GM13976 (cell line): ENCODE measurements at regions of chr5 and their contacts with region 1.

Region 1: GRCh38 chr5:160342403-160342941 is 28.0 kb downstream of the C1QTNF2 start:
- DNase-seq: no peak
- CTCF ChIP-seq: no peak

Region 2: GRCh38 chr5:160021831-160022446 is 320.5 kb before region 1 on chr5:
- in situ Hi-C with region 1: loop called (anchors 10 kb)
- DNase-seq: peak; percentile 60
- CTCF ChIP-seq: peak; percentile 77

Region 3: GRCh38 chr5:160199410-160199911 is 143.0 kb before region 1 on chr5:
- in situ Hi-C with region 1: loop called (anchors 5 kb)
- DNase-seq: peak; percentile 90
- CTCF ChIP-seq: peak; percentile 93

Region 4: DNA sequence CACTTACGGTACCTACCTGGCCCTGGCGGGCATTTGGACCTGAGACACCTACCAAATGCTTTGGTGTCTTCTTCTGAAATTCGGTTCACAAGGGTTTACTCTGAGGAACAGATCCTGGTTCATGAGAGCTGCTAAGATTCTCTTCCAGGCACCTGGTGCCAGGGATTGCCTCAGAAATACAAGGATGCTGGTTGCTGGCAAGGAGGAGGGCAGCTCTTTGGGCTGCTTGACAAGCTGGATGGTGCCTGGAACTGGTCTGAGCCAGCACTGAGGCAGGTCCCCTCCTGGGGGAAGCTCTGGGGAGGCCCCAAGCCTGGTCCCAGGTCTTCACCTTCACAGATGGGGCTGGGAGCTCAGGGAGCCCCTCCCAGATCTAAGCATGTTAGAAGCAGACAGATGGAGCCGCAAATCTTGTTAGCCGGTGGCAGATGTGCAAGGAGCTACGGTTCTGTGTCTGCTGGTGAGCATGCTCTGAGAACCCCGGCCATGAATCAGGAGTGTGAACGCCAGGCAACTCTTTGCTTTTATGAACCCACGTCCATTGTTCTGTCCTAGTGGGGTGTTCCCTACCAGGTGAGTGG is 96.9 kb before region 1 on chr5:
- in situ Hi-C with region 1: no loop called
- DNase-seq: no peak
- CTCF ChIP-seq: no peak

Region 5: DNA sequence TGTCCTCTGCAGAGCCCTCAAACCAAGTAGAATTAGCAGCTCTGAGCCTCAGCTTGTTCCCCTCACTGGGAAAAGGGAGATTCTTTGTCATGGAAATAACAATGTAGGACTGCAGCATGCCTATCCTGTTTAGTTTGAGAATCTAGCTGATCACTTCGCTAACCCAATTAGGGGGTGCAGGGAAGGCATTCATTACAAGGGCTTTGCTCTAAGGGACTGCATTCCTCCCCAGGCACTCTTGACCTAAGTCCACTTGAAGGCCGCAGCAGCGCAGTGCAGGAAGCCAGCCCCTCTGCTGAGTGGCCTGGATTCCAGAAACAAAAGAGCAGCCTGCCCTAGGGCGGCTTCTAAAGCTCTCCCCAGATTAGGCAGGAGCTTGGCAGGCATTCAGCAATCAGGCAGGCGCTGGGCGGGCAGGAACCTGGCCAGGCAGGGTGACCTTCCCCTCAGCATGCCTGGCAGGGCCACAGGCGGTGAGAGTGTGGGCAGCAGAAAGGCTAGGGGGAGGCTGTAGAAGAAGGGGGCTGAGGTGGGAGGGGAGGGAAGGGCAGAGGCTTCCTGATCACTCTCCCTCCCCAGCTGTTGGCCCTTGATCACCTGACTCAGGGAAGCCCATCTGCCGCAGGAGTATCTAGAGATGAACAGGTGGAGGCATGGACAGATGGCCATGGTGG is 55.0 kb before region 1 on chr5:
- in situ Hi-C with region 1: no loop called
- DNase-seq: no peak
- CTCF ChIP-seq: no peak